ENCODE measurements at regions of chr14 and their contacts with region 1.

Region 1: GRCh38 chr14:92135267-92135666 is 13.5 kb downstream of the CPSF2 start:
- DNase-seq: no peak
- H3K4me3 ChIP-seq: no peak overlapping the region
- H3K27ac ChIP-seq: no peak overlapping the region
- H3K4me1 ChIP-seq: no peaks in the 10 kb centered on the region
- H3K27me3 ChIP-seq: no peaks in the 10 kb centered on the region
- CTCF ChIP-seq: peak; percentile 61 to 64 (median 64)

Region 2: GRCh38 chr14:92037989-92038388 is 97.3 kb before region 1 on chr14:
- intact Hi-C with region 1: no loop called
- DNase-seq: no peak
- H3K4me3 ChIP-seq: peak overlapping the region; percentile 75 to 92
- H3K27ac ChIP-seq: no peak overlapping the region
- H3K4me1 ChIP-seq: peaks cover 3 to 37% of the 10 kb centered on the region in 2 donors
- H3K27me3 ChIP-seq: no peaks in the 10 kb centered on the region
- CTCF ChIP-seq: no peak

Region 3: DNA sequence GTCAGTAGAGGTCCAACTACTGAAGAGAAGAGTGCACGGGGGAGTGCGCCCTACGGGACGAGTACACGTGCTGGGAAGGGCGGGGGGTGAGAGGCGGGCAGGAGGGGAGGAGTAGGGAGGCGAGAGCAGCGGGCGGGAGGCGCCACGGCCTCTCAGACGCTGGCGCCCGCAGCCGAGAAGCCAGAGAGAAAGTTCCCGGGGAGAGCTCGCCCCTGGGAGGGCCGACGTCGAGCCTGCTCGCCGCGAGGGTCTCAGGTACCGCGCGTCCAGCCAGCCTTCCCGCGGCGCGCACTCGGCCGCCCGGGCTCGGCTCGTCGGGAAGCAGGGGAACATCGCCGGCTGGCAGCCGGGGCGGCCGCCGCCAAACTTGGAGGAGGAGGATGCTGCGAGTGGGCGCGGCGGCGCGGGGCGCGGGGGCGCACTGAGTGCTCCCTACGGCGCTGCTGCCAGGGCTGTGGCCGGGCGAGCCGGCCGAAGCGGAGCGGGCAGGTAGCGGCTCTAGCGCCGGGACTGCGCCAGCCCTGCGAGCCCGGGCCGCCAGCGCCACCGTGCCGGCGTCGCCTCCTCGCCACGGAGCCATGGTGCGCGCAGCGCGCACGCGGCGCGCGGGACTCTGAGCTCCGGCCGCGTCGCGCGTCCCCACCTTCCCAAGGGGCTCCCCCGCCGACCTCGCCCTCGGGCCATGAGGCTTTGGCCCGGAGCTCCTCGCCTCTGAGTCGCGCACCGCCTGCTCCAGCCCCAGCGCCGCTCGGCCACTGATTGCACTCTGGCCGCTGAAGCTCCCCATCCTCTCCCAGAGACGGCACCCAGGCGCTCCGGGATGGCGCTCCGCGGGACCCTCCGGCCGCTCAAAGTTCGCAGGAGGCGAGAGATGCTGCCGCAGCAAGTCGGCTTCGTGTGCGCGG is 188.0 kb after region 1 on chr14 and contains the start of gene SLC24A4:
- intact Hi-C with region 1: loop called (anchors 5 kb)
- DNase-seq: no peak
- H3K4me3 ChIP-seq: peak within 1 kb of the TSS; percentile 70 to 91
- H3K27ac ChIP-seq: peak within 1 kb of the TSS in 1 of 2 donors; percentile 42
- H3K4me1 ChIP-seq: peaks cover 0 to 9% of the 10 kb centered on the region in 2 donors
- H3K27me3 ChIP-seq: no peaks in the 10 kb centered on the region
- CTCF ChIP-seq: no peak
- total RNA-seq, gene SLC24A4: not detected

Region 4: DNA sequence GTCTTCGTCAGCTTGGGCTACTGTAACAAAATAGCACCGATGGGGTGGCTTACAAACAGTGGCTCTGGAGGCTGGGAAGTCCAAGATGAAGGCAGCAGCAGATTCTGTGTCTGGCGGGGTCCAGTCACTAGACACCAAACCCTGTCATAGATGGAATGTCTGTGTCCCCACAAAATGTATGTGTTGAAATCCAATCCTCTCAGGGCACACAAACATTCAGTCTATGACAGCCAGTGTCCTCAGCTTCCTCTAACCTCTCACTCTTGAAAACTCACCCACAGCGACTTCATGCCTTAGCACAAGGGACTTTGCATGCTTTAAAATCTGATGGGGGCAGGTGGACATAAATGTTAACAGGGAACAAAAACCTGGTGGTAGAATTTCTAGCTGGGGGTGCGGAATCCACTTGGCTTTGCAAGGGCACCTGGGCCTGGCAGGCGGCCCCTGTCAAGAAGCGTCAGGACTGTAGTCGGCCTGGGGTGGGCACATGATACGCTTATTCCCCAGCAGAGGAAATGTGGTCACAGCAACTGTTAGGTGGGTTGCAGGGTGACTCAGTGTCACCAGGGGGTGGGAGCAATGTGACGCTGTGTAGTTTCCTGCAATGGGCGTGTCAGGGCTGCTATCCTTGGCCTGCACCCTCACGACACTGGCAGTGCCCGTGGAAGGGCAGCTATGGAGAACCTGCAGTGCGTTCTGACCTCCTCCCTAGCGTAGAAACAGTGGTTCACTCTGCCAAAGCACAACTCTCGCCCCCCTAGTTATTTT is 396.0 kb after region 1 on chr14:
- intact Hi-C with region 1: no loop called
- DNase-seq: peak in 1 of 2 donors; percentile 50
- H3K4me3 ChIP-seq: no peak overlapping the region
- H3K27ac ChIP-seq: no peak overlapping the region
- H3K4me1 ChIP-seq: peaks cover 4 to 5% of the 10 kb centered on the region in 2 donors
- H3K27me3 ChIP-seq: no peaks in the 10 kb centered on the region
- CTCF ChIP-seq: no peak

Region 5: GRCh38 chr14:92680781-92681650 is 545.7 kb after region 1 on chr14:
- intact Hi-C with region 1: loop called (anchors 5 kb)
- DNase-seq: peak; percentile 50 to 86
- H3K4me3 ChIP-seq: no peak overlapping the region
- H3K27ac ChIP-seq: peak overlapping the region in 1 of 2 donors; percentile 65
- H3K4me1 ChIP-seq: no peaks in the 10 kb centered on the region
- H3K27me3 ChIP-seq: no peaks in the 10 kb centered on the region
- CTCF ChIP-seq: peak; percentile 87 to 98 (median 94)